SK-N-SH (cell line): ENCODE measurements at regions of chr1 and their contacts with region 1.

Region 1: DNA sequence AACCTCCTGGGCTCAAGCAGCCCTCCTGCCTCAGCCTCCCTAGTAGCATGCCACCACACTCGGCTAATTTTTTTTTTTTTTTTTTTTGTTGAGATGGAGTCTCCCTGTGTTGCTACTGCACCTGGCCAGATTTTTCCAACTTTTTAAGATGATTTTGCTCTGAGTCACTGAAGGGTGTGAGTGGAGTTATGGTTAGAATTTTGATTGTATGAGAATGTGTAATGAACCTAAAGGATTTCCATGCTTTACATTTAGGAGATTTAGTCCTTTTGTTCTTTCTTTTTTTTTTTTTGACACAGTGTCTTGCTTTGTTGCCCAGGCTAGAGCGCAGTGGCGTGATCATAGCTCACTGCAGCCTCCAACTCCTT is 12.3 kb downstream of the SARS1 start:
- DNase-seq: no peak
- H3K4me3 ChIP-seq: no peak overlapping the region
- H3K27ac ChIP-seq: no peak overlapping the region
- H3K4me1 ChIP-seq: no peaks in the 10 kb centered on the region
- H3K27me3 ChIP-seq: no peaks in the 10 kb centered on the region
- CTCF ChIP-seq: no peak
- EP300 ChIP-seq: no peak
- RAD21 ChIP-seq: no peak

Region 2: GRCh38 chr1:109239580-109240095 is 13.6 kb after region 1 on chr1:
- CTCF ChIA-PET with region 1: interaction called, 10 read pairs
- POLR2A ChIA-PET with region 1: interaction called, 3 read pairs
- DNase-seq: peak; percentile 55
- H3K4me3 ChIP-seq: no peak overlapping the region
- H3K27ac ChIP-seq: peak overlapping the region; percentile 3 to 43; a peak in 2 of 4 replicates
- H3K4me1 ChIP-seq: peaks cover 11 to 14% of the 10 kb centered on the region in 2 experiments; a peak in 2 of 4 replicates
- H3K27me3 ChIP-seq: no peaks in the 10 kb centered on the region
- CTCF ChIP-seq: peak; percentile 53
- EP300 ChIP-seq: no peak
- RAD21 ChIP-seq: peak; percentile 28

Region 3: GRCh38 chr1:109282497-109282951 is 56.5 kb after region 1 on chr1:
- CTCF ChIA-PET with region 1: no interaction called
- POLR2A ChIA-PET with region 1: no interaction called
- DNase-seq: no peak
- H3K4me3 ChIP-seq: peak overlapping the region; percentile 69 to 84
- H3K27ac ChIP-seq: peak overlapping the region; percentile 45 to 73; a peak in 3 of 4 replicates
- H3K4me1 ChIP-seq: peaks cover 0 to 22% of the 10 kb centered on the region in 2 experiments; a peak in 1 of 4 replicates
- H3K27me3 ChIP-seq: no peaks in the 10 kb centered on the region
- CTCF ChIP-seq: no peak
- EP300 ChIP-seq: no peak
- RAD21 ChIP-seq: no peak